Dendritic cell treated with granulocyte-macrophage colony-stimulating factor and Interleukin-4, amounts not matched to agents 40 ng/mL and 50 ng/mL, for 4 days (primary cell): ENCODE measurements at regions of chr7 and their contacts with region 1.

Region 1: DNA sequence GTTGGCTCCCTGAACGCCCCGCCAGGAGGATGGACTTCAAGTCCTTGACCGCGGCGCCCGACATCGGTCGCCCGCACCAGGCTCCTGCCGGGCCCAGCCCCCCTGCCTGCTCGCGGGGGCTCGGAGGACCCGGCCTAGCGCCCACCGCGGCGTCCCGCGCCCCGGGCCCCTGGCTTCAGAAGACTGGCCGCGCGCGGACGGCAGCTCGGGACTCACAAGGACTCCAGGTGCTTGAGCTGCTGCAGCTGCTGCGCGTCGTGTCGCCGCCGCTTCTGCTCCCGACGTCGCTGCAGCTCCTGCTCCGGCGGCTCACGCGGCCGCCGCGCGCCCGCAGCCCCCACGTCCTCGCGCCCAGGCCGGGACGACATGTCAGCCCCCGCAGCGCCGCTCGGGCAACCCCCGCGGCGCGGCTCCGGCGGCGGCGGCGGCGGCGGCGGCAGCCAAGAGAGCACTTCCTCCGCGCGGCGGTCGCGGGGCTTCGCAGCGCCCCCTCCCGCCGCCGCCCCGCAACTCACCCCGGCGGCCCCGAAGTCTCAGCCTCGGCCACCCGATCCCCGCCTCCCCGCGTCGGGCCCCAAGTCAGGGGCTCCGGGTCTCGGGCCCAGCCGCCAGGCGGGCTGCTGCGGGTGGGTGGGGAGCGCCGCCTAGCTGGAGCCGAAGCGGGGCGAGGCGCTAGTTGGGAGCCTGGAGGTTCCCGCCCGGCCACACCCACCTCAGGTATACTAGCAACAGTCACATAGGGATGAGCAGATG is at the start of gene RP9:
- H3K4me3 Mint-ChIP-seq: peak within 1 kb of the TSS; percentile 86
- H3K27ac Mint-ChIP-seq: peak within 1 kb of the TSS; percentile 78
- H3K4me1 Mint-ChIP-seq: peaks cover 28% of the 10 kb centered on the region
- H3K27me3 Mint-ChIP-seq: peaks cover 17% of the 10 kb centered on the region

Region 2: GRCh38 chr7:32694182-32694581 is 415.0 kb before region 1 on chr7:
- intact Hi-C with region 1: loop called (anchors 10 kb)
- H3K4me3 Mint-ChIP-seq: no peak overlapping the region
- H3K27ac Mint-ChIP-seq: no peak overlapping the region
- H3K4me1 Mint-ChIP-seq: peaks cover 11% of the 10 kb centered on the region
- H3K27me3 Mint-ChIP-seq: no peaks in the 10 kb centered on the region

Region 3: DNA sequence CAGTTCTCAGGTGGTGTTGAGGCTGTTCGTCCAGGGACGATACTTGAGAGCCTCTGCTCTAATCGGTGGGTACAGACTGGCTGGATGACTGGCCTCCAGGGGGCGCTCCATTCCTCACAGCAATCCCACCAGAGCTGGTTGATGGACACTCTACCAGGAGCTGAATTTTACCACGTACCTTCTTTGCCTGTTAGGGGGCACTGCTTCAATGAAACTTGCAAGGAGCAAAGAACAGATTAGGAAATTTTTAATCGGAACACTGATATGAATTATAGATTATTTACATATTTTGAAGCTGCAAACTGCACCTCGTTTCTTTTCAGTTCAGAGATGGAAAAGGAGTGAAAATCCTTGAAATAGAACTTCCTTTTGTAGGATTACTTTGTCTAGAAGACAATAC is 262.5 kb before region 1 on chr7:
- intact Hi-C with region 1: loop called (anchors 5 kb)
- H3K4me3 Mint-ChIP-seq: peak overlapping the region; percentile 48
- H3K27ac Mint-ChIP-seq: no peak overlapping the region
- H3K4me1 Mint-ChIP-seq: no peaks in the 10 kb centered on the region
- H3K27me3 Mint-ChIP-seq: no peaks in the 10 kb centered on the region

Region 4: GRCh38 chr7:33050535-33051318 is 58.5 kb before region 1 on chr7:
- intact Hi-C with region 1: no loop called
- H3K4me3 Mint-ChIP-seq: peak overlapping the region; percentile 57
- H3K27ac Mint-ChIP-seq: peak overlapping the region; percentile 73
- H3K4me1 Mint-ChIP-seq: peaks cover 21% of the 10 kb centered on the region
- H3K27me3 Mint-ChIP-seq: no peaks in the 10 kb centered on the region

Region 5: GRCh38 chr7:33062782-33063443 is 46.3 kb before region 1 on chr7:
- intact Hi-C with region 1: loop called (anchors 1 kb)
- H3K4me3 Mint-ChIP-seq: peak overlapping the region; percentile 92
- H3K27ac Mint-ChIP-seq: peak overlapping the region; percentile 91
- H3K4me1 Mint-ChIP-seq: peaks cover 28% of the 10 kb centered on the region
- H3K27me3 Mint-ChIP-seq: no peaks in the 10 kb centered on the region